Mammary epithelial cell (primary cell): ENCODE measurements at regions of chr1 and their contacts with region 1.

Region 1: DNA sequence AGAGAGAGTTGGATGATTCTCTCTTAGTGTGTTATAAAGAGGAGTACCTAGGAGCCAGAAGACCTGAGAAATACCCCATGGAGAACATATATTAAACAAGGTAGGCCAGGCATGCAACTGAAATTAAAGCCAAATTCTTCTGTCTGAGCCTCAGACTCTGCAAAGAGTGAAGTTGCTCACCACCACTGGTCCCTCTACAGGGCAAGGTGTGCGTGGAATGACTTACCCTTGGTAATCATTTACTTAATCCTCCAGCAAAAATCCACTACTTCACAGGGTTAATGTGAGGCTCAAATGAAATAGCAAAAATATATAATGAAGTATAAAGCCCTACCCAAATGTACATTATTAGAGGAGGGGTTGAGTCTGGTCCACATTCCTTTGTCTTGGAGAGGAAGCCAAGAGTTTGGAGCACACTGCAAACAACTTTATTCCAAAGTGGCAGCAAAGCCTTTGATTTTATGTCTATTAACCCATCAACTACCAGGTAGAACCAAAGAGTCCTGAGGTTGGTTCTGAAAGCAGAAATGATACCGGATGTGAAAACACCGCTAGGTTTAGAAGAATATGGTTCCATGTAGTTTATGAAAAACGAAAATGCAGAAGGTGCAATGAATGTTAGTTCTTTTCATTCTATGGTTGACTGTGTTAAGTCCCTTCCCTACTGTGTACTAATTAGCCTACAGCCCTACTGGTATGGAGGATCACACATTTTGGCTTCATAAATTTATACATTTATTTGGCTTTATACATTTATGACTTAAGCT is 8.5 kb downstream of the SSR2 start:
- DNase-seq: no peak
- H3K4me3 ChIP-seq: no peak overlapping the region
- H3K27ac ChIP-seq: no peak overlapping the region
- H3K4me1 ChIP-seq: peaks cover under 1% of the 10 kb centered on the region
- H3K27me3 ChIP-seq: no peaks in the 10 kb centered on the region
- CTCF ChIP-seq: no peak

Region 2: GRCh38 chr1:155591770-155592169 is 420.5 kb before region 1 on chr1:
- CTCF ChIA-PET with region 1: no interaction called
- dilution Hi-C with region 1: no loop called
- in situ Hi-C with region 1: no loop called
- intact Hi-C with region 1: no loop called
- DNase-seq: peak; percentile 33
- H3K4me3 ChIP-seq: no peak overlapping the region
- H3K27ac ChIP-seq: no peak overlapping the region
- H3K4me1 ChIP-seq: no peaks in the 10 kb centered on the region
- H3K27me3 ChIP-seq: no peaks in the 10 kb centered on the region
- CTCF ChIP-seq: peak; percentile 43 to 50

Region 3: DNA sequence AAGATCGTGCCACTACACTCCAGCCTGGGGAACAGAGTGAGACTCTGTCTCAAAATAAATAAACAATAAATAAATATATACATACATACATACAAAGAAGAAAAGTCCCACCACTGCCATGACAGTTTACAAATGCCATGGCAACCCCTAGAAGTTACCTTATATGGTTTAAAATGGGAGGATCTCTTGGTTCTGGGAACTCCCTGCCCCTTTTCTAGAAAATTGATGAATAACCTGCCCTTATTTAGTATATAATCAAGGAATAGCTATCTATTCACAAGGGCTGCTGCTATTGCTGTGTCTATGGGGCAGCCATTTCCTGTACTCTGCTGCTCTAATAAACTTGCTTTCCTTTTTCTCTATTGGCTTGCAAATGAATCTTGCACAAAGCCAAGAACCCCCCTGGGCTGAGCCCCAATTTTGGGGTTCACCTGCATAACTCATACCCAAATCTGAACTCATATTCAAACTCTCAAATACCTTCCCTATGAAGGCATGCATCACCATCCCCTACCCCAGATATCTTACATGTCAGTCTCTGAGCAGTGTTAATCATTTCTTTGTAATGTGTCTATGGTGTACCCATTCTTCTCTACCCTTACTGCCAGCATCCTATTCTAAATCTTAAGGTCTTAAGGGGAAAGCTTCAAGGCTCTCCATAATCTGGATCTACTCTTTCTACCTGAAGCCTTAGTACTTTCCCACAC is 164.3 kb before region 1 on chr1:
- CTCF ChIA-PET with region 1: no interaction called
- dilution Hi-C with region 1: loop called (anchors 5 kb)
- in situ Hi-C with region 1: no loop called
- intact Hi-C with region 1: no loop called
- DNase-seq: no peak
- H3K4me3 ChIP-seq: no peak overlapping the region
- H3K27ac ChIP-seq: no peak overlapping the region
- H3K4me1 ChIP-seq: no peaks in the 10 kb centered on the region
- H3K27me3 ChIP-seq: no peaks in the 10 kb centered on the region
- CTCF ChIP-seq: no peak

Region 4: DNA sequence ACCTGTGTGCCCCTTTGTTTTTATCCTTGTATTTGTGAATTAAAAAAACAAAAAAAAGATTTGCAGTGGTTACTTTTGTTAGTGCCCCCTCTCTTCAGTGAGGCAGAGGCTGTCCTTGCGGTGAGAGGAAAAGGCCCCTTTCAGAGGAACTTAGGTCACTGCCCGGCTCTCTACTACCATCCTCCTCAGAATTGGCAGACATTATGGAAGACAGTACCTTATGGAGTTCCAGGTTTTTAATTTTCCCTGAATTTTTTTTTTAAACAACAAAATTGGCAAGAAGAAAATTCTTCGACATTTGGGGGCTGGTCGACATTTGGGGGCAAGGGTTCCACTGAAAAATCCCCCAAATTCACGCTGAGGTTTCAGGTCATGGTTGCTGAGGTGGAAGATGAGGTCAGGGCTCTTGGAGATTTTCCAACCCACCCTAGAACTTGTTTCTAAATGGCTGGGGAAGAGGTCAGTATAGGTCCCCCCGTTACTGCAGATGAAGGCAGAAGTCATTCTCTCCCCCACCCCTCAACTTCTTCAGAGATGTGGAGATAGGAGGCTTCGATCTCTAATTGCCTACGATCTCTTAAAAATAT is 65.5 kb before region 1 on chr1:
- CTCF ChIA-PET with region 1: no interaction called
- dilution Hi-C with region 1: loop called (anchors 5 kb)
- in situ Hi-C with region 1: no loop called
- intact Hi-C with region 1: no loop called
- DNase-seq: no peak
- H3K4me3 ChIP-seq: no peak overlapping the region
- H3K27ac ChIP-seq: no peak overlapping the region
- H3K4me1 ChIP-seq: peaks cover 19% of the 10 kb centered on the region
- H3K27me3 ChIP-seq: no peaks in the 10 kb centered on the region
- CTCF ChIP-seq: no peak

Region 5: GRCh38 chr1:155961937-155962336 is 50.3 kb before region 1 on chr1:
- CTCF ChIA-PET with region 1: no interaction called
- dilution Hi-C with region 1: no loop called
- in situ Hi-C with region 1: no loop called
- intact Hi-C with region 1: no loop called
- DNase-seq: peak; percentile 100
- H3K4me3 ChIP-seq: no peak overlapping the region
- H3K27ac ChIP-seq: peak overlapping the region; percentile 96
- H3K4me1 ChIP-seq: peaks cover 34% of the 10 kb centered on the region
- H3K27me3 ChIP-seq: no peaks in the 10 kb centered on the region
- CTCF ChIP-seq: peak; percentile 9 to 47

Region 6: GRCh38 chr1:156067262-156067661 is 55.0 kb after region 1 on chr1:
- CTCF ChIA-PET with region 1: no interaction called
- dilution Hi-C with region 1: no loop called
- in situ Hi-C with region 1: no loop called
- intact Hi-C with region 1: loop called (anchors 2 kb)
- DNase-seq: no peak
- H3K4me3 ChIP-seq: no peak overlapping the region
- H3K27ac ChIP-seq: no peak overlapping the region
- H3K4me1 ChIP-seq: peaks cover 7% of the 10 kb centered on the region
- H3K27me3 ChIP-seq: no peaks in the 10 kb centered on the region
- CTCF ChIP-seq: no peak